ENCODE measurements at regions of chr1 and their contacts with region 1.

Region 1: GRCh38 chr1:223732992-223733798 is 20.9 kb downstream of the CAPN2 start:
- DNase-seq: no peak
- H3K4me3 ChIP-seq: no peak overlapping the region
- H3K27ac ChIP-seq: no peak overlapping the region
- H3K4me1 ChIP-seq: peaks cover 5 to 31% (median 17%) of the 10 kb centered on the region in 4 experiments; a peak in 6 of 7 replicates
- H3K27me3 ChIP-seq: peaks cover 7 to 33% (median 33%) of the 10 kb centered on the region in 4 experiments
- CTCF ChIP-seq: no peak
- EP300 ChIP-seq: no peak
- POLR2A ChIP-seq: no peak
- RAD21 ChIP-seq: no peak

Region 2: DNA sequence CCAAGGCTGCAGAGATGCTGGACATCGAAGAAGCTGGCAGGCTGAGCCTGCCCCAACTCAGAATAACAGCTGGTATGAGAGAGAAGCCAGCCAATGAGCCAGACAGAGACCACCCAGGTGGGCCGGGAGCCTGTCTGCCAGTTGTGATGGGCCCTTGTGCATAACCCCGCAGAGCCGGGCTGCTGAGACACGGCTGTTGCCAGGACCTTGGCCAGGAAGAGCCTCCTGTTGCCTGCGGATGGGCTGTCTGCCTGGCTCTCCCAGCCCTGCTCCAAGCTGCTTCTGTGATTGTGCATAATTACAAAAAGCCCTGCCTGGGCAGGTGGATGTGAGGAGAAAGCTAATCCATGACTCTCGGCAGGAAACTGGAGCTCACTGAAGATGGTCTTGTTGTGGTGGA is 194.2 kb before region 1 on chr1:
- CTCF ChIA-PET with region 1: no interaction called
- POLR2A ChIA-PET with region 1: no interaction called
- DNase-seq: no peak
- H3K4me3 ChIP-seq: no peak overlapping the region
- H3K27ac ChIP-seq: no peak overlapping the region
- H3K4me1 ChIP-seq: peaks cover 0 to 3% (median 0%) of the 10 kb centered on the region in 4 experiments; a peak in 1 of 7 replicates
- H3K27me3 ChIP-seq: no peaks in the 10 kb centered on the region
- CTCF ChIP-seq: no peak
- EP300 ChIP-seq: no peak
- POLR2A ChIP-seq: no peak
- RAD21 ChIP-seq: no peak

Region 3: DNA sequence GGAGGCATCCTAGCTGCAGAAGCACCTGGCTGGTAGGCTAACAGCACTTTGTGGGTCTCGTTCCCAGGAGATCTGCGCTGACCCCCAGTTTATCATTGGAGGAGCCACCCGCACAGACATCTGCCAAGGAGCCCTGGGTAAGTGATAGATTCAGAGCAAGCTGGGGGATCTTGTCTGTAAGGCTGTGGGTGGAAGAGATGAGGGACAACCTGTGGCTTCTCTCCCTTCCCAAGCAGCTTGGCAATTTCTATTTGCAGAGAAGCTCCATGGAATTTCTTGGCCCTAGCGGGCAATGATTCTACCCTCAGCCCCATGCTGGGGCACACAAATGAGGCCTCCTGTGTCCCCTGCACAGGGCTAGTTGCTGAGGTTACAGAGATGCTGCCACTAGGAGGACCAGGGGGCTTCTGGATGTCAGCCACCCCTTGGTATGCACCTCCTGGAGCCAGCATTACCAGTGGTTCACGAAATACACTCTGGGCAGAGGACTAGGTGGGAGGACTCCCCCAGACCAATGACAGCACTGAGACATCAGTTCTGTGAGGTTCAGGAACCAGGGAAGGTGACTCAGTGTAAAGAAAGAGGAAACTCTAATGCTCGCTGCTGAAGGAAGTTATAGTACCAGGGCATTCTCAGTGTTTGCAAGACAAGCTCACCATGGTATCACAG is 15.4 kb before region 1 on chr1:
- CTCF ChIA-PET with region 1: interaction called, 14 read pairs
- POLR2A ChIA-PET with region 1: interaction called, 7 read pairs
- DNase-seq: no peak
- H3K4me3 ChIP-seq: no peak overlapping the region
- H3K27ac ChIP-seq: no peak overlapping the region
- H3K4me1 ChIP-seq: peaks cover 4 to 26% (median 16%) of the 10 kb centered on the region in 4 experiments; a peak in 6 of 7 replicates
- H3K27me3 ChIP-seq: peaks cover 0 to 73% (median 70%) of the 10 kb centered on the region in 4 experiments; a peak in 6 of 7 replicates
- CTCF ChIP-seq: no peak
- EP300 ChIP-seq: no peak
- POLR2A ChIP-seq: no peak
- RAD21 ChIP-seq: no peak; a peak in 1 of 4 replicates